ENCODE measurements at regions of chr6 and their contacts with region 1.

Region 1: DNA sequence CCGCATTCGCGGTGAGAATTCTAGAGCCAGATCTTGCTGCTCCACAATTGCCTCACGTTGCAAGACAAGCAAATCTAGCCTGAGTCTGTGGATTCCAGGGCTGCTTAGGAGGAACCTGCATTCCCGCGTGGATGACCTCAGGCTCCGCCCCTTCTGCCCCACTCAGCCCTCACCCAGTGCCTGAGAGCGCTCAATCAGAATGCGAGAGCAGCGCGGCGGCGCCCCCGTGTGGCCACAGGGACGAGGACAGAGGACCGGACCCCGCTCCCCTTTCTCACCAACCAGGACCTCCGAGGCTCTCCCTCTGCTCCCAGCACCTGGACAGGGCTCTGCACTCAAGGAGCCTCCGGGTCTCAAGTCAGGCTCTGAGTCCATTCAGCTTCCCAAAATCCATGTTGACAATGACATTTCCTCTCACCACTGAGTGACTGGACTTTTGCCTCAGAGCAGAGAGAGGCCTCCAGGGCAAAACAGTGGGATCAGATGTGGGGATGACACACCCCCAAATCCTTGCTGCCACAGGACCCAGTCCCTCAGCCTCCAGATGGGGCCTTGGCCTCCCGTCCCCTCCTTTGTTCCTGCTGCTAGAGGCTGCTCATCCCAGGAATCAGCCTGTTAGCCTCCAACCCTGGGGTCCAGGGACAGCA is 52.0 kb downstream of the RPP21 start:
- DNase-seq: peak; percentile 24
- H3K4me3 ChIP-seq: no peak overlapping the region
- H3K27ac ChIP-seq: no peak overlapping the region
- H3K27me3 ChIP-seq: peaks cover 9% of the 10 kb centered on the region
- CTCF ChIP-seq: peak; percentile 89

Region 2: DNA sequence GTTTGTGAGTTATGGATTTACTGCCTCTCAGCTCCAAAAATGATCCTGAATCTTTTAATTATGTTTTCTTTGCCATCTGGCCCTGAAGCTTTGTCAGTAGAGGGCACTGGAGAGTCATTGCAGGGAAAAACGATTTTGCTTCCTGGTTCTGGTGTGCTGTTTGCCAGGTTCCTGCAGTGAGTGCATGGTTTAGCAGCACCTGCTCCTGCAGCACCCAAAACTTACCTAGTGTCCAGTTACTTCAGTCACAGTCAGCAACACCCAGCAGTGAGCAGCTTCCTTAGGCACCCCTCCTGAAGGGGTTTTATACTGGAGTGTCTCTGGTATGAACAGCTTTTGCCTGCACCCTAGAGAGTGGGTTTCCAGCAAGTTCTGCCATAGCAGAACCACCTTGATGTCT is 177.7 kb before region 1 on chr6:
- CTCF ChIA-PET with region 1: interaction called, 32 read pairs
- POLR2A ChIA-PET with region 1: no interaction called
- DNase-seq: no peak
- H3K4me3 ChIP-seq: no peak overlapping the region
- H3K27ac ChIP-seq: no peak overlapping the region
- H3K27me3 ChIP-seq: peaks cover 2% of the 10 kb centered on the region
- CTCF ChIP-seq: peak; percentile 95

Region 3: GRCh38 chr6:30238174-30238795 is 158.7 kb before region 1 on chr6:
- CTCF ChIA-PET with region 1: interaction called, 13 read pairs
- POLR2A ChIA-PET with region 1: no interaction called
- DNase-seq: no peak
- H3K4me3 ChIP-seq: no peak overlapping the region
- H3K27ac ChIP-seq: no peak overlapping the region
- H3K27me3 ChIP-seq: peaks cover 3% of the 10 kb centered on the region
- CTCF ChIP-seq: peak; percentile 54

Region 4: DNA sequence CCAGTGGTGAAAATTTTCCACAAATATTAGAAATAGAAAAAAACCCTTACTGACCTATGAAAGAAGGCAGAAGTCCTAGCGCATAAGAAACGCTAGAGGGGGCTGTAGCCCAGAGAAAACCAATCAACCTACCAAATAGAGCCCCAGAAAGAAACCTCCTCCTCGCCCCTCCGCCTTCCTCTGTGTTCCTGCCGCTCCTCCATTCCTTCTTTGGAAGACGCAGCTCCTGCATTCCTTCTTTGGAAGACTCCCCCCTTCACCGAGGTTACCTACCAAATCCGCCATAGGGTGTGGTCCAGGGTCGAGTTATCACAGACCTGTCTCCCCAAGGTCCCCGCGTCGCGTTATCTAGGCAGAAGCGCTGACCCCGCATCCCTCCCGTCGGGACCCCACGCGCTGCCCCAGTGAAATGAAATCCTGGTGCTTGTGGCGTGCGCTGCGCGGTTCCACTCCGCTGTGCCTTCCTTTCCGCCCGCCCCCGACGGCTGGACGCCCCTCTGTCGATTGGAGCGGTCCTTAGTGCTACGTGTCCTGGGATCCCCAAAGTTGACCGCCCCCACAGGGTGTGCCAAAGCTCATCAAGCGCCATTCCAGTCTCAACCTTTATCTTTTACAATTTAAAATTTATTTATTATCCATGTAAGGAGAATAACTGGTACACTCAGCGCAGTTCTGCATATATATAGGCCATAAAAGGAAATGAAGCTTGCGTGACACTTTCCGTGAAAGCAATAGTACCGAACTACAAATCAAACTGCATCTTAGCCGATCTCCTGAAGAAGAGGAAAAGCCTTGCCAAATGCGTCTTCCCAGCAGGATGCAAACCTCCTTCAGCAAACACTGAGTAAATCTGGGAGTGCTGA is 39.0 kb before region 1 on chr6:
- CTCF ChIA-PET with region 1: interaction called, 28 read pairs
- POLR2A ChIA-PET with region 1: no interaction called
- DNase-seq: peak; percentile 36
- H3K4me3 ChIP-seq: peak overlapping the region; percentile 58
- H3K27ac ChIP-seq: no peak overlapping the region
- H3K27me3 ChIP-seq: peaks cover 48% of the 10 kb centered on the region
- CTCF ChIP-seq: peak; percentile 82

Region 5: GRCh38 chr6:30508890-30509736 is 112.2 kb after region 1 on chr6:
- CTCF ChIA-PET with region 1: no interaction called
- POLR2A ChIA-PET with region 1: no interaction called
- DNase-seq: no peak
- H3K4me3 ChIP-seq: no peak overlapping the region
- H3K27ac ChIP-seq: no peak overlapping the region
- H3K27me3 ChIP-seq: no peaks in the 10 kb centered on the region
- CTCF ChIP-seq: no peak